AG04450 (cell line): ENCODE measurements at regions of chr3 and their contacts with region 1.

Region 1: GRCh38 chr3:66938338-66938963 is 59.7 kb upstream of the KBTBD8 start:
- DNase-seq: peak; percentile 24
- H3K4me3 ChIP-seq: no peak overlapping the region
- H3K27ac ChIP-seq: no peak overlapping the region
- H3K27me3 ChIP-seq: no peaks in the 10 kb centered on the region
- CTCF ChIP-seq: peak; percentile 87

Region 2: GRCh38 chr3:66253790-66254620 is 684.4 kb before region 1 on chr3:
- CTCF ChIA-PET with region 1: interaction called, 25 read pairs
- POLR2A ChIA-PET with region 1: no interaction called
- DNase-seq: no peak
- H3K4me3 ChIP-seq: no peak overlapping the region
- H3K27ac ChIP-seq: no peak overlapping the region
- H3K27me3 ChIP-seq: no peaks in the 10 kb centered on the region
- CTCF ChIP-seq: peak; percentile 62

Region 3: GRCh38 chr3:66748175-66748876 is 190.1 kb before region 1 on chr3:
- CTCF ChIA-PET with region 1: no interaction called
- POLR2A ChIA-PET with region 1: no interaction called
- DNase-seq: no peak
- H3K4me3 ChIP-seq: no peak overlapping the region
- H3K27ac ChIP-seq: no peak overlapping the region
- H3K27me3 ChIP-seq: no peaks in the 10 kb centered on the region
- CTCF ChIP-seq: no peak

Region 4: GRCh38 chr3:66957367-66957766 is 18.9 kb after region 1 on chr3:
- CTCF ChIA-PET with region 1: interaction called, 13 read pairs
- POLR2A ChIA-PET with region 1: no interaction called
- DNase-seq: no peak
- H3K4me3 ChIP-seq: no peak overlapping the region
- H3K27ac ChIP-seq: no peak overlapping the region
- H3K27me3 ChIP-seq: peaks cover 10% of the 10 kb centered on the region
- CTCF ChIP-seq: no peak

Region 5: DNA sequence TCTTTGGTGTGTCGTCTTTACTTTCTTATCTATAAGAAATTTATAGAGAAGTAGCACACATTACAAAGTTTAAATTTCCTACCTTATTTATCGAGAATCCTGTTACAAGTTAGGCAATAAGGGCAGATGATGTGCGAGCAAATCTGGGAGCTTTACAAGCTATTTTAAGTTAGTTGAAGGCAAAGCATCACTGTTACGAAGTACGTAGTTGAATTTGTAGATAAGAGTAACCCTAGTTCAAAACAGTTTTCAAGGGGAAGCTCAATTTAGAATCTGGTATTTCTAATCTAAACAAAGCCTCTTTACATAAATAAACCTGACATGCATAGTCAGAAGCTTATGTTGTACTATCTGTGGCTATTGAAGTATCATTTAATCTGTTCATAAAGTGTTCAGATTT is 68.0 kb after region 1 on chr3:
- CTCF ChIA-PET with region 1: interaction called, 10 read pairs
- POLR2A ChIA-PET with region 1: no interaction called
- DNase-seq: peak; percentile 75
- H3K4me3 ChIP-seq: no peak overlapping the region
- H3K27ac ChIP-seq: no peak overlapping the region
- H3K27me3 ChIP-seq: no peaks in the 10 kb centered on the region
- CTCF ChIP-seq: no peak

Region 6: GRCh38 chr3:67113802-67114407 is 175.5 kb after region 1 on chr3:
- CTCF ChIA-PET with region 1: interaction called, 20 read pairs
- POLR2A ChIA-PET with region 1: no interaction called
- DNase-seq: peak; percentile 70
- H3K4me3 ChIP-seq: no peak overlapping the region
- H3K27ac ChIP-seq: no peak overlapping the region
- H3K27me3 ChIP-seq: no peaks in the 10 kb centered on the region
- CTCF ChIP-seq: peak; percentile 97

Region 7: DNA sequence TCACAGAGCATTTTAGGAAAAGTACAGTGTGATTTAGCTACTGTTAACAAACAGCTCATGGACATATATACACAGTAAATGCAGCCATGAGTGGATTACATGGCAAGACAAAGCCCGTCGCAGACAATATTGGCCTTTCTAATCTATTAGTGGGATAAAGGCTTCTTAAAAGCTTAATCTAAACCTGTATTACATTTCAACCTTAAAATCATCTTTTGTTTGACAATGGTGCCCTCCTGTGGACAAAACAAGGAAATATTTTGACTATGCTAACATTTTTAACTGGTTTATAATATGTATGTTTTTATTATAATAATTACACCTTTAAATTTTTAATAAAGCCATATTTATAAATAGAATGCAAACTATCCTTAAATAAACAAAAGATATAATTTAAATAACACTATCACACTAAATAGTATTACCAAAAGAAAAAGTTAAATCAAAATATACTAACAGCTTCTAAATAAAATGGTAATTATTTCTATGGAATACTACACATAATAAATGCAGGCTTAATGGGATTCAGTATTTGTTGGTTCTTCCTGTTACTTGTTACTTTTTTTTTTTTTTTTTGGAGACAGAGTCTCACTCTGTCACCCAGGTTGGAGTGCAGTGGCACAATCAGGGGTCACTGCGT is 1955.3 kb after region 1 on chr3:
- CTCF ChIA-PET with region 1: interaction called, 23 read pairs
- POLR2A ChIA-PET with region 1: no interaction called
- DNase-seq: no peak
- H3K4me3 ChIP-seq: no peak overlapping the region
- H3K27ac ChIP-seq: no peak overlapping the region
- H3K27me3 ChIP-seq: peaks cover 2% of the 10 kb centered on the region
- CTCF ChIP-seq: peak; percentile 44